ENCODE measurements at regions of chr5 and their contacts with region 1.

Region 1: GRCh38 chr5:14925326-14925725 is 53.7 kb upstream of the ANKH start:
- DNase-seq: no peak
- H3K4me3 Mint-ChIP-seq: peak overlapping the region; percentile 45
- H3K27ac Mint-ChIP-seq: peak overlapping the region; percentile 87
- H3K4me1 Mint-ChIP-seq: peaks cover 50% of the 10 kb centered on the region
- H3K27me3 Mint-ChIP-seq: no peaks in the 10 kb centered on the region

Region 2: DNA sequence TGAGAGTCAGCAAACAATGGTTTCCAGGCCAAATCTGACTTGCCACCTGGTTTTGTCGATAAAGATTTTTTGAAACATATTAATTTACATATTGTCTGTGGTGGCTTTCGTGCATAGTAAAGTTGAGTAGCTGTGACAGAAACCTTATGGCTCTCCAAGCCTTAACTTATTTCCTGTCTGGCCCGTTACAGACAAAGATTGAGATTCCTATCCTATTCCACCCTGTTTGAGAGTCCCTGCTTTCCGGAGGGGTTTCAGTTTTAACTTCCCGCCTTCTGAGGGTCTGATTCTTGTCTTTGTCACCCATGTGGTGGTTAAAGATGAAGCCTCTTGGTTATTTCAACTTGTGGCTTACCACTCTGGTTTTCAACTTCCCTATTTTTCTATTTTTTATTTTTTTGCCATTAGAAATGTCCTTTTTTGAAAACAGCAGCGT is 249.4 kb before region 1 on chr5:
- intact Hi-C with region 1: loop called (anchors 5 kb)
- DNase-seq: no peak
- H3K4me3 Mint-ChIP-seq: peak overlapping the region; percentile 42
- H3K27ac Mint-ChIP-seq: peak overlapping the region; percentile 88
- H3K4me1 Mint-ChIP-seq: peaks cover 66% of the 10 kb centered on the region
- H3K27me3 Mint-ChIP-seq: no peaks in the 10 kb centered on the region

Region 3: GRCh38 chr5:14727428-14727865 is 197.9 kb before region 1 on chr5:
- intact Hi-C with region 1: loop called (anchors 10 kb)
- DNase-seq: peak; percentile 57
- H3K4me3 Mint-ChIP-seq: no peak overlapping the region
- H3K27ac Mint-ChIP-seq: no peak overlapping the region
- H3K4me1 Mint-ChIP-seq: peaks cover 2% of the 10 kb centered on the region
- H3K27me3 Mint-ChIP-seq: no peaks in the 10 kb centered on the region

Measured in activated T-helper 2 cell treated with anti-CD3 and anti-CD28 coated beads, Interferon-gamma antibody, Interleukin-2, Interleukin-4, amounts not matched to agents 10 μg/mL and 5 μg/mL and 100 μg/mL, durations not matched to agents 14 hours and 24 hours and 36 hours (primary cell).